Left ventricle myocardium superior (tissue), 1 donor: ENCODE measurements at regions of chr18 and their contacts with region 1.

Region 1: GRCh38 chr18:2223849-2224248 is 347.5 kb downstream of the METTL4 start:
- DNase-seq: no peak
- ATAC-seq: peak; percentile 56

Region 2: GRCh38 chr18:1585879-1586488 is 637.9 kb before region 1 on chr18:
- intact Hi-C with region 1: loop called (anchors 5 kb)
- DNase-seq: no peak
- ATAC-seq: peak; percentile 52

Region 3: DNA sequence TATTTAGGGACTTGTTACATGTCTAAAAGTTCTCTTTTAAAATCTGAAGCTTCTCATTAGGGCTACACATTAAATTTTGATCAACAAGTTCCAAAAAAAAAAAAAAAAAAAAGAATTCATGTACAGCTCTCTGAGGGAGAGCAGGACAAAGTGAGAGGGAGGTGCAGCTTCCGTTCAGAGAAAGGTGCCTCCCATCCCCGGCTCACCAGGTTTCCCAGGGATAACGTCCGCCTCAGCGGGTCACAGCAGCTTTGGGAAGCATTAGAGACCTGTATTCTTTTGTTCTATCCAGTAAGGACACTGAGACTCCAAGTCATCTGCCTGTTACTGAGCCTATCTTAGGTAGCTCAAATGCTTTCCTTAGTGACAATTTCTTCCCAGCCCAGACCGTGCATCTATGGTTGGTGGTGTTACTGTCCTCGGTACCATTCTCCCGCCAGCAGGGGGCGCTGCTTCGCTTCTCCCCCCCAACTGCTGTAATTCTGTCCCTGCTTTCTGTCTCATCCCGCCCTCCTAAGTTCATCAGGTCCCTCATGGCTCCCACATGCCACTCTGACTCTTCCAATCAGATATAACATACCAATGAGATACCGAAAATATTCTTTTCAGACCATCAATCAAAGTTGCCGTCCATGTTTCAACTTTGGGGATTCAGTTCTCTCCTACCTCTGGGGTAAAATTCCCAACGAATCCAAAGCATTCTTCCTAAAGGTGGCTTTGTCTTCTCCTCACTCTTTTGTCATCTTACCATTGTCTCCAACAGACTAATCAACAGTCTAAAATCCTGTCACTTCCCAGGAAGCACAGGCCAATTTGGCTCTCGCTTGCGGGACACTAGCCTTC is 119.0 kb before region 1 on chr18:
- intact Hi-C with region 1: loop called (anchors 5 kb)
- DNase-seq: peak; percentile 56
- ATAC-seq: peak; percentile 77

Region 4: DNA sequence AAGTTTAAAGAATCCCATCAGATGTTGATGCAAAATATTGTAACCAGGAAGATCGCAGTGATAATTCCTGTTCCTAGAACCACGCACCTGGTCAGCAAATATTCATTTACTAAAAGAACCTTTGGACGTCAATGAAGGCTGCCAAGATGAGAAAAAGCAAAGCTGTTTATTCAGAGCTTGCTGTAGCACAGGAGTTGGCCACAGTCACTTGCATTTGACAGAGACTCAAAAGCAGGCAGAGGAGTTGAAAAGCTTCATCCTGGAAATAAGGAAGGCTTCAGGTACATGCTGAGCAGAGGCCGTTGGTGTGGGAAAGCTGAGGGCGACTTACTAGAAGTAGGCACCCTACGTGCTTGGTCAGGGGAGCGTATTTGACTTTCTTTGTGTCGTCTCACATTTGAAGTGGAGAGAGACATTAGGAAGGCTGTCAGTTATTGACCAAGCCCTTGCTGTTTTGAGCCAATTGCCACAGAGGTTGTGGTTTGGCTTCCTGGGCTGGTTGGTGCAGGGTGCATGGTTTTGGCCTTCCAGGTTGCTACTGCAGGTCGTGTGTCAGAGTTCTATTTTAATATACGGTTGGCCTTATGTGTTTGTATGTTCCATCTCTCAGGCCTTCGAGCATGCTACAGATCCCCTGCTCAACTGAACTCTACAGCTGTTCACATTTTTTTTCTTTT is 57.8 kb after region 1 on chr18:
- intact Hi-C with region 1: no loop called
- DNase-seq: no peak
- ATAC-seq: no peak